ENCODE measurements at regions of chr20 and their contacts with region 1.

Region 1: DNA sequence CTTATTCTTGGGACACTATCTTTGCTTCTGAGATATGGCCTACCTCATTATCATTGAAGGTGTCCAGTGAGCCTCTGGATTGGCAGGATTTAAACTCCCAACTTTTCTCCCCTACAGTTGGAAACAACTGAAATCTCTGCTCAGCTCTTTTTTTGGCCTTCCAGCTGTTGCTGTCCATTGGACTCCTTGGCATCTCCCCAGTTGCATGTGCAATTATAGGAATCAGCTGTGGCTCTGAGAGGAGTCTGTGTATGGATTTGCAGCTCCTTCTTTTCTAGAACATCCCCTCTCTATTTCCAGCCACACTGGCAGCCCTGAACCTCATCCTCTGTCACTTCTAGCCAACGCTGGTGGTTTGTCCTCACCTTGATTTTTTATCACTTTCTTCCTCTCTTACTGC is 21.2 kb downstream of the RAB22A start:
- DNase-seq: peak; percentile 65 to 77
- ATAC-seq: peak; percentile 90 to 93
- H3K4me3 ChIP-seq: no peak overlapping the region
- H3K27ac ChIP-seq: peak overlapping the region; percentile 60 to 80 (median 66)
- H3K4me1 ChIP-seq: peaks cover 33 to 53% of the 10 kb centered on the region in 2 donors
- H3K27me3 ChIP-seq: no peaks in the 10 kb centered on the region
- CTCF ChIP-seq: no peak
- POLR2A ChIP-seq: no peak

Region 2: GRCh38 chr20:58349586-58349985 is 18.9 kb after region 1 on chr20:
- in situ Hi-C with region 1: no loop called
- intact Hi-C with region 1: loop called (anchors 1 kb)
- DNase-seq: no peak
- ATAC-seq: peak; percentile 99 to 100
- H3K4me3 ChIP-seq: no peak overlapping the region
- H3K27ac ChIP-seq: peak overlapping the region in 1 of 4 donors; percentile 54
- H3K4me1 ChIP-seq: peaks cover 9 to 11% of the 10 kb centered on the region in 2 donors
- H3K27me3 ChIP-seq: no peaks in the 10 kb centered on the region
- CTCF ChIP-seq: peak in 2 of 5 experiments; percentile 18 to 19
- POLR2A ChIP-seq: no peak

Measured in gastrocnemius medialis (tissue), 4 donors.